Transverse colon (tissue), 4 donors: ENCODE measurements at regions of chr21 and their contacts with region 1.

Region 1: DNA sequence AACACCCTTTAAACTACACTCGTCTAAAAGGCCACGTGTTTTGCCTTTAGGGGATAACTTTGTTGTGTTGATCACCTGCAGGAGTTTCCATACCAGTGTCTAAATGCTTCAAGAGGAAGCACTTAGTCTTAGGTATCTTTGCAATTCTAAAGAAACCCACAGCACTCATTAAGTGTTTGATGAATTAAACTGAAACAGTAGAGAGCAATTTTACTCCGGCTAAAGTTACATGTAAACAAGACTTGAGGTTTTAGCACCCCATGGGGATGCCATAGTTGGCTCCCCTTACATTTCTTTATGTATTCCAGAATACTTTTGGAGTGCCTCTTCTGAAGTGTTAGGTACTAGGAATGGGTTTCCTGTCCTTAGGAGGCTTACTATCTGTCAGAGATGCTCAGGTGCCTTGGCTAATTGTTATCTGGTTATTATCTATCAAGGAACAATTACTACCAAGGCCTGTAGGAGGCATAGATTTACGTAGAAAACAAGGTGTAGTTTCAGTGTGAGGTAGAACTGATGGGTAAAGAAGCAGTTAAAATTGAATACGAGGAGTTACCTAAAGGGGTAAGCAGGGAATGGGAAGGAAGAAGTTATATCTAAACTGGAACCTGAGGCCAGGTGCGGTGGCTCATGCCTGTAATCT is 176.8 kb upstream of the SAMSN1 start:
- DNase-seq: no peak
- H3K4me3 ChIP-seq: no peak overlapping the region
- H3K27ac ChIP-seq: no peak overlapping the region
- H3K4me1 ChIP-seq: no peaks in the 10 kb centered on the region
- H3K27me3 ChIP-seq: no peaks in the 10 kb centered on the region
- CTCF ChIP-seq: no peak
- EP300 ChIP-seq: no peak
- POLR2A ChIP-seq: no peak

Region 2: GRCh38 chr21:14737922-14738321 is 15.0 kb after region 1 on chr21:
- in situ Hi-C with region 1: no loop called
- intact Hi-C with region 1: loop called (anchors 1 kb)
- DNase-seq: peak; percentile 46
- H3K4me3 ChIP-seq: no peak overlapping the region
- H3K27ac ChIP-seq: peak overlapping the region in 1 of 4 donors; percentile 27
- H3K4me1 ChIP-seq: peaks cover 0 to 5% (median 0%) of the 10 kb centered on the region in 4 donors
- H3K27me3 ChIP-seq: no peaks in the 10 kb centered on the region
- CTCF ChIP-seq: peak; percentile 53 to 86 (median 65)
- EP300 ChIP-seq: no peak
- POLR2A ChIP-seq: no peak

Region 3: GRCh38 chr21:14773777-14774345 is 50.9 kb after region 1 on chr21:
- in situ Hi-C with region 1: no loop called
- intact Hi-C with region 1: no loop called
- DNase-seq: peak; percentile 83
- H3K4me3 ChIP-seq: no peak overlapping the region
- H3K27ac ChIP-seq: no peak overlapping the region
- H3K4me1 ChIP-seq: peaks cover 0 to 5% (median 0%) of the 10 kb centered on the region in 4 donors
- H3K27me3 ChIP-seq: no peaks in the 10 kb centered on the region
- CTCF ChIP-seq: peak; percentile 65 to 72 (median 68)
- EP300 ChIP-seq: no peak
- POLR2A ChIP-seq: no peak